Gastrocnemius medialis (tissue), 4 donors: ENCODE measurements at regions of chr17 and their contacts with region 1.

Region 1: GRCh38 chr17:63946440-63947367 is 14.6 kb upstream of the CD79B start:
- DNase-seq: no peak
- ATAC-seq: peak; percentile 34 to 47
- H3K4me3 ChIP-seq: no peak overlapping the region
- H3K27ac ChIP-seq: peak overlapping the region; percentile 78 to 99 (median 88)
- H3K4me1 ChIP-seq: peaks cover 45 to 49% of the 10 kb centered on the region in 2 donors
- H3K27me3 ChIP-seq: no peaks in the 10 kb centered on the region
- CTCF ChIP-seq: peak; percentile 60 to 84 (median 79)
- POLR2A ChIP-seq: no peak

Region 2: GRCh38 chr17:63991611-63992010 is 44.9 kb after region 1 on chr17:
- in situ Hi-C with region 1: no loop called
- intact Hi-C with region 1: loop called (anchors 1 kb)
- DNase-seq: no peak
- ATAC-seq: no peak
- H3K4me3 ChIP-seq: no peak overlapping the region
- H3K27ac ChIP-seq: no peak overlapping the region
- H3K4me1 ChIP-seq: peaks cover 27 to 28% of the 10 kb centered on the region in 2 donors
- H3K27me3 ChIP-seq: no peaks in the 10 kb centered on the region
- CTCF ChIP-seq: no peak
- POLR2A ChIP-seq: no peak

Region 3: DNA sequence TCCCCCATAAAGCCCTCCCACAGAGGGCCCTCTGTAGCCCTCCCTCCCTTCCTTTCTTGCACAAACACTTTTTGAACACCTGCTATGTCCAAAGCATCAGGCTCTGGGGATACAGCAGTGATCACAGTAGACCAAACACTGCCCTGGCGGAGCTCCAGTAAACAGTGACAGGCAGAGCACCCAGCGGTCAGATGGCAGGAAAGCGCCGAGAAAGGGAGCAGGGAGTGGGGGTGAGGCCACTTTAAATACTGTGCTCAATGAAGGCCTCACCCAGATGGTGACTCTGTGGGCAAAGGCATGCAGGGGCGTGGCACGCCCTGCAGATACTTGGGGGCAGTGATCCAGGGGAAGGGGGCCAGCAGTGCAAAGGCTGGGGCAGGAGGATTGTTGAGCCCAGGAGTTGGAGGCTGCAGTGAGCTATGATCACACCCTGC is 59.0 kb after region 1 on chr17:
- in situ Hi-C with region 1: no loop called
- intact Hi-C with region 1: no loop called
- DNase-seq: no peak
- ATAC-seq: no peak
- H3K4me3 ChIP-seq: peak overlapping the region; percentile 28 to 50 (median 38)
- H3K27ac ChIP-seq: peak overlapping the region; percentile 57 to 80 (median 75)
- H3K4me1 ChIP-seq: peaks cover 9 to 28% of the 10 kb centered on the region in 2 donors
- H3K27me3 ChIP-seq: peaks cover 0 to 6% (median 4%) of the 10 kb centered on the region in 3 donors
- CTCF ChIP-seq: no peak
- POLR2A ChIP-seq: no peak